ENCODE measurements at regions of chrX and their contacts with region 1.

Region 1: GRCh38 chrX:54999717-55000598 is at the start of gene APEX2:
- DNase-seq: peak; percentile 72 to 95 (median 84)
- ATAC-seq: peak; percentile 94
- H3K4me3 ChIP-seq: peak within 1 kb of the TSS; percentile 89
- H3K4me3 Mint-ChIP-seq: peak within 1 kb of the TSS; percentile 96
- H3K27ac ChIP-seq: peak within 1 kb of the TSS; percentile 84 to 97
- H3K27ac Mint-ChIP-seq: peak within 1 kb of the TSS; percentile 97
- H3K4me1 ChIP-seq: peaks cover 20% of the 10 kb centered on the region
- H3K4me1 Mint-ChIP-seq: peaks cover 36% of the 10 kb centered on the region
- H3K27me3 ChIP-seq: no peaks in the 10 kb centered on the region
- H3K27me3 Mint-ChIP-seq: no peaks in the 10 kb centered on the region
- CTCF ChIP-seq: no peak
- total RNA-seq, gene APEX2: 6.4 to 7.2 TPM

Region 2: GRCh38 chrX:53433651-53434639 is 1566.0 kb before region 1 on chrX and contains the start of gene HSD17B10:
- CTCF ChIA-PET with region 1: no interaction called
- POLR2A ChIA-PET with region 1: no interaction called
- intact Hi-C with region 1: loop called in 1 of 2 experiments (anchors 5 kb)
- DNase-seq: peak; percentile 67 to 92 (median 80)
- ATAC-seq: peak; percentile 98
- H3K4me3 ChIP-seq: peak within 1 kb of the TSS; percentile 63
- H3K4me3 Mint-ChIP-seq: peak within 1 kb of the TSS; percentile 99
- H3K27ac ChIP-seq: peak within 1 kb of the TSS; percentile 34 to 39
- H3K27ac Mint-ChIP-seq: peak within 1 kb of the TSS; percentile 93
- H3K4me1 ChIP-seq: peaks cover 18% of the 10 kb centered on the region
- H3K4me1 Mint-ChIP-seq: peaks cover 16% of the 10 kb centered on the region
- H3K27me3 ChIP-seq: no peaks in the 10 kb centered on the region
- H3K27me3 Mint-ChIP-seq: peaks cover 3% of the 10 kb centered on the region
- CTCF ChIP-seq: no peak
- total RNA-seq, gene HSD17B10: 27.0 to 28.6 TPM

Region 3: DNA sequence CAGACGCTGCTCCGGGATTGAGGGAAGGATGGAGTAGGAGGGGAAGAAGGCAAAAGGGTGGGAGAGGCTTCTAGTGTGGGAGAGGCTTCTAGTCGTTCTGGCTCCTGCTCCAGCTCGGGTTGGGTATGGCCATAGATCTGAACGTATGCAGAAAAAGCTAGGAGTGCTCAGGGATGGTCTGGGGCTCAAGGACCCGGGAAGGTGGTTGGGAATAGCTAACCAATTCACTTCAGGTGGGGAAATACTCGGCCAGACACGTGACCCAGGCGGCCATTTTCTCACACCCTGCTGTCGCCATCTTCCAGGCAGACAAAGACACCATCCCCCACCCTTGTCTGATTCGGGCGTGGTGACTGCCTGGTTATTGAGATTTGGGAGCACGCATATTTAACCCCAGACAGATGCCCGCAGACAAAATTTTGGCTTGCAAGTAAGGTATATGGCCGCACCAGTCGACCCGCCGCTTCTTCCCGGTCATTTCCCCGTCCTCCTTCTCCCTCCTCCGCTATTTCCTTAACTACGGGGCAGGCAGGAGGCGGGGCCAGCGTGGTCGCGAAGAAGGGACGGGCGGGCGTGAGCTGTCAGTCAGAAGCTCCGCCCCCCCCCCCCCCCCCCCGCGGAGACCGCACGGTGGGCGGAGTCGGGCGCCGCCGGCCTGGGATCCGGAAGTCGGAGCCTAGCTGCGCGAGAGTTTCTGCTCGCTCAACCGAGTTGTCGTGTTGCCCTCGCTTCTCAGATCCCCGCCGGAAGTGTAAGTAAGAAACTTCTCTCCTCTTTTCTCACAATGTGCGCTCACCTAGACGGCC is 470.2 kb before region 1 on chrX and contains the start of gene GNL3L:
- CTCF ChIA-PET with region 1: no interaction called
- POLR2A ChIA-PET with region 1: interaction called, 8 read pairs
- intact Hi-C with region 1: loop called in 1 of 2 experiments (anchors 10 kb)
- DNase-seq: peak; percentile 56 to 90 (median 79)
- ATAC-seq: peak; percentile 84
- H3K4me3 ChIP-seq: peak within 1 kb of the TSS; percentile 76
- H3K4me3 Mint-ChIP-seq: peak within 1 kb of the TSS; percentile 99
- H3K27ac ChIP-seq: peak within 1 kb of the TSS; percentile 64 to 90
- H3K27ac Mint-ChIP-seq: peak within 1 kb of the TSS; percentile 94
- H3K4me1 ChIP-seq: peaks cover 38% of the 10 kb centered on the region
- H3K4me1 Mint-ChIP-seq: peaks cover 44% of the 10 kb centered on the region
- H3K27me3 ChIP-seq: no peaks in the 10 kb centered on the region
- H3K27me3 Mint-ChIP-seq: no peaks in the 10 kb centered on the region
- CTCF ChIP-seq: no peak
- total RNA-seq, gene GNL3L: 21.5 to 22.8 TPM

Region 4: GRCh38 chrX:54808605-54809483 is 191.1 kb before region 1 on chrX:
- CTCF ChIA-PET with region 1: no interaction called
- POLR2A ChIA-PET with region 1: interaction called, 7 read pairs
- intact Hi-C with region 1: loop called in 1 of 2 experiments (anchors 5 kb)
- DNase-seq: peak; percentile 75 to 97 (median 84)
- ATAC-seq: peak; percentile 70
- H3K4me3 ChIP-seq: peak overlapping the region; percentile 93
- H3K4me3 Mint-ChIP-seq: peak overlapping the region; percentile 95
- H3K27ac ChIP-seq: peak overlapping the region; percentile 65 to 88
- H3K27ac Mint-ChIP-seq: peak overlapping the region; percentile 98
- H3K4me1 ChIP-seq: peaks cover 25% of the 10 kb centered on the region
- H3K4me1 Mint-ChIP-seq: peaks cover 24% of the 10 kb centered on the region
- H3K27me3 ChIP-seq: no peaks in the 10 kb centered on the region
- H3K27me3 Mint-ChIP-seq: no peaks in the 10 kb centered on the region
- CTCF ChIP-seq: no peak

Region 5: DNA sequence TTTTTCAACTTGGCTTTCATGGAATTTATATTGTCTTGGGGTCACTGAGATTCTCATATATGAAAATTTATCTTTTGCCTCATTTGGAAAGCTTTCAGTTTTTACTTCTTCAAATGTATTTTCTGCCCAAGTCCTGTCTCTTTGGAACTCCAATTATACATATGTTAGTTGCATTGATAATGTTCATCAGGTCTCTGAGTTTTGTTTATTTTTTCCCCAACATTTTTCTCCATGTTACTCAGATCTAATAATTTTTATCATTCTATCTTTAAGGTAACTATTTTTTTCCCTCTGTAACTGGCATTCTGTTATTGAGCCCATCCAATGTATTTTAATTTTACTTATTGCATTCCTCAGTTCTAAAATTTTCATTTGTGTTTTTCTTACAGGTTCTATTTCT is 90.0 kb before region 1 on chrX:
- CTCF ChIA-PET with region 1: no interaction called
- POLR2A ChIA-PET with region 1: no interaction called
- intact Hi-C with region 1: no loop called
- DNase-seq: no peak
- ATAC-seq: no peak
- H3K4me3 ChIP-seq: no peak overlapping the region
- H3K4me3 Mint-ChIP-seq: no peak overlapping the region
- H3K27ac ChIP-seq: no peak overlapping the region
- H3K27ac Mint-ChIP-seq: no peak overlapping the region
- H3K4me1 ChIP-seq: no peaks in the 10 kb centered on the region
- H3K4me1 Mint-ChIP-seq: no peaks in the 10 kb centered on the region
- H3K27me3 ChIP-seq: no peaks in the 10 kb centered on the region
- H3K27me3 Mint-ChIP-seq: no peaks in the 10 kb centered on the region
- CTCF ChIP-seq: no peak

Region 6: GRCh38 chrX:54921427-54922021 is 78.4 kb before region 1 on chrX:
- CTCF ChIA-PET with region 1: no interaction called
- POLR2A ChIA-PET with region 1: interaction called, 7 read pairs
- intact Hi-C with region 1: loop called in 1 of 2 experiments (anchors 5 kb)
- DNase-seq: peak; percentile 1 to 73 (median 44)
- ATAC-seq: peak; percentile 89
- H3K4me3 ChIP-seq: peak overlapping the region; percentile 61
- H3K4me3 Mint-ChIP-seq: peak overlapping the region; percentile 90
- H3K27ac ChIP-seq: no peak overlapping the region
- H3K27ac Mint-ChIP-seq: peak overlapping the region; percentile 76
- H3K4me1 ChIP-seq: peaks cover 18% of the 10 kb centered on the region
- H3K4me1 Mint-ChIP-seq: peaks cover 19% of the 10 kb centered on the region
- H3K27me3 ChIP-seq: no peaks in the 10 kb centered on the region
- H3K27me3 Mint-ChIP-seq: no peaks in the 10 kb centered on the region
- CTCF ChIP-seq: no peak